ENCODE measurements at regions of chr18 and their contacts with region 1.

Region 1: GRCh38 chr18:54269893-54270844 is 852 bp downstream of the POLI start:
- DNase-seq: peak in 1 of 2 donors; percentile 38
- ATAC-seq: peak; percentile 30 to 81 (median 52)
- H3K4me3 ChIP-seq: peak overlapping the region; percentile 58 to 88 (median 76)
- H3K27ac ChIP-seq: peak overlapping the region; percentile 68 to 98 (median 93)
- H3K4me1 ChIP-seq: peaks cover 0 to 31% (median 14%) of the 10 kb centered on the region in 9 donors
- H3K27me3 ChIP-seq: no peaks in the 10 kb centered on the region
- CTCF ChIP-seq: peak in 7 of 9 donors; percentile 43 to 61 (median 46)

Region 2: DNA sequence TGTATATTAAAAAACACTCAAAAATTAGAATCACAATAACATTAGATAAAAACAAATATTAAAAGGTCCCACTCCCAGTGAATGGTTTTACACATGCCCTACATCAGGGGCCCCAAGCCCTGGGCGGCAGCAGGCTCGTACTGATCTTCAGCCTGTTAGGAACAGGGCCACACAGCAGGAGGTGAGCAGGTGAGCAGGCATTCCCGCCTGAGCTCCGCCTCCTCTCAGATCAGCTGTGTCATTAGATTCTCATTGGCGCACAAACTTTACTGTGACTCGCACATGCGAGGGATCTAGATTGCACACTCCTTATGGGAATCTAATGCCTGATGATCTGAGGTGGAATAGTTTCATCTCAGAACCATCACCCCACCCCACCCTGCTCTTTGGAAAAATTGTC is 119.9 kb before region 1 on chr18:
- intact Hi-C with region 1: loop called in 1 of 10 experiments (anchors 10 kb)
- DNase-seq: no peak
- ATAC-seq: no peak
- H3K4me3 ChIP-seq: no peak overlapping the region
- H3K27ac ChIP-seq: no peak overlapping the region
- H3K4me1 ChIP-seq: peaks cover 0 to 24% (median 0%) of the 10 kb centered on the region in 9 donors
- H3K27me3 ChIP-seq: no peaks in the 10 kb centered on the region
- CTCF ChIP-seq: no peak

Region 3: GRCh38 chr18:54173980-54174630 is 96.1 kb before region 1 on chr18:
- intact Hi-C with region 1: loop called in 1 of 10 experiments (anchors 10 kb)
- DNase-seq: no peak
- ATAC-seq: no peak
- H3K4me3 ChIP-seq: no peak overlapping the region
- H3K27ac ChIP-seq: no peak overlapping the region
- H3K4me1 ChIP-seq: peaks cover 0 to 22% (median 5%) of the 10 kb centered on the region in 9 donors
- H3K27me3 ChIP-seq: no peaks in the 10 kb centered on the region
- CTCF ChIP-seq: no peak

Region 4: GRCh38 chr18:54191352-54191751 is 78.8 kb before region 1 on chr18:
- intact Hi-C with region 1: loop called in 1 of 10 experiments (anchors 10 kb)
- DNase-seq: no peak
- ATAC-seq: no peak
- H3K4me3 ChIP-seq: no peak overlapping the region
- H3K27ac ChIP-seq: no peak overlapping the region
- H3K4me1 ChIP-seq: peaks cover 0 to 4% (median 0%) of the 10 kb centered on the region in 9 donors
- H3K27me3 ChIP-seq: no peaks in the 10 kb centered on the region
- CTCF ChIP-seq: no peak

Region 5: GRCh38 chr18:54224379-54225014 is 45.7 kb before region 1 on chr18 and contains the start of gene MBD2:
- intact Hi-C with region 1: loop called in 8 of 10 experiments (anchors 1 to 5 kb)
- DNase-seq: peak; percentile 94 to 96
- ATAC-seq: peak; percentile 99 to 100 (median 100)
- H3K4me3 ChIP-seq: peak within 1 kb of the TSS; percentile 44 to 82 (median 72)
- H3K27ac ChIP-seq: peak within 1 kb of the TSS; percentile 59 to 87 (median 82)
- H3K4me1 ChIP-seq: peaks cover 0 to 48% (median 34%) of the 10 kb centered on the region in 9 donors
- H3K27me3 ChIP-seq: no peaks in the 10 kb centered on the region
- CTCF ChIP-seq: peak in 6 of 9 donors; percentile 21 to 65 (median 54)
- total RNA-seq, gene MBD2: 37.4 to 61.3 (median 42.6) TPM

Region 6: GRCh38 chr18:54232485-54233227 is 37.5 kb before region 1 on chr18:
- intact Hi-C with region 1: loop called in 4 of 10 experiments (anchors 5 kb)
- DNase-seq: no peak
- ATAC-seq: peak in 5 of 8 donors; percentile 56 to 88 (median 78)
- H3K4me3 ChIP-seq: no peak overlapping the region
- H3K27ac ChIP-seq: peak overlapping the region in 6 of 10 donors; percentile 2 to 67 (median 51)
- H3K4me1 ChIP-seq: peaks cover 0 to 9% (median 0%) of the 10 kb centered on the region in 9 donors
- H3K27me3 ChIP-seq: no peaks in the 10 kb centered on the region
- CTCF ChIP-seq: peak in 1 of 9 donors; percentile 20

Region 7: GRCh38 chr18:54357660-54358494 is 87.7 kb after region 1 on chr18 and contains the starts of genes C18orf54 and STARD6:
- intact Hi-C with region 1: loop called in 1 of 10 experiments (anchors 10 kb)
- DNase-seq: peak; percentile 83 to 87
- ATAC-seq: peak; percentile 97 to 100 (median 99)
- H3K4me3 ChIP-seq: peak within 1 kb of the TSS; percentile 51 to 80 (median 78)
- H3K27ac ChIP-seq: peak within 1 kb of the TSS in 9 of 10 donors; percentile 17 to 84 (median 64)
- H3K4me1 ChIP-seq: peaks cover 0 to 14% (median 8%) of the 10 kb centered on the region in 9 donors
- H3K27me3 ChIP-seq: no peaks in the 10 kb centered on the region
- CTCF ChIP-seq: peak in 8 of 9 donors; percentile 25 to 62 (median 50)
- total RNA-seq, gene C18orf54: 0.55 to 2.9 (median 0.90) TPM
- total RNA-seq, gene STARD6: 0.47 TPM in 1 of 10 donors, not detected in the others

Measured in heart right ventricle (tissue), 16 donors.